Right ventricle myocardium superior (tissue), 1 donor: ENCODE measurements at regions of chr1 and their contacts with region 1.

Region 1: GRCh38 chr1:17606826-17607440 is 67.4 kb downstream of the ARHGEF10L start:
- DNase-seq: peak; percentile 82
- ATAC-seq: peak; percentile 75

Region 2: DNA sequence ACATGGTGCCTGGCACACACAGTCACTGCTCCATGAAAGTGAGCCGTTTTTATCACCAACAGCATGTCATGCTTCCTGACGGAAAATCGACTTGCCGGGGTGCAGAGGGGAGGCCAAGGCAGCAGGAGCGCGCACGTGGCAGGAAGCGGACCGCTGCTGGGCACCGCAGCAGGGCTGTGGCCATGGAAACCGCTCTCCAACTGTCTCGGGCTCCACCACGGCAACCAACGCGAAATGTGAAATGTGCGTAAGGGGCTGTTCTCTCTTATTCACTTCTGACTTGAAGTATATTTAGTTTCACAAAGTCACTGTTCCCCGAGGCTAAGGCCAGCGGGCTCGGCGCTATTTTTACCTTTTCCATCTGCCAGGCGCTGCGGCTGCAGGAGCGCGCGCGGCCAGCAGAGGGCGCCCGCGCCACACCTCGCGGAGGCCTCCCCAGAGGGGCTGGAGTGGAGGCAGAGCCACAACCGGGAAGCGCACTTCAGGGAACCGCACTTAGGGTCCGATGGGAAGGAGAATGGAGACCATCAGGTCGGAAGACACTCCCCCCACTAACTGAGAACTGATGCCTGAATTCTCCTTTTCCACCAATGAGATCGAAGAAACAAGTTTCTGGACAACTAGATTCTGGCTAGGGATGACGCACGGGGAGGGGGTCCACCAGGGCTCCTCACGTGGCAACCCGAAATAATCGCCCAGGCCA is 187.2 kb before region 1 on chr1:
- intact Hi-C with region 1: loop called (anchors 10 kb)
- DNase-seq: peak; percentile 84
- ATAC-seq: peak; percentile 88

Region 3: GRCh38 chr1:17502326-17502778 is 104.6 kb before region 1 on chr1:
- intact Hi-C with region 1: loop called (anchors 2 kb)
- DNase-seq: peak; percentile 93
- ATAC-seq: peak; percentile 99